ENCODE measurements at regions of chr17 and their contacts with region 1.

Region 1: DNA sequence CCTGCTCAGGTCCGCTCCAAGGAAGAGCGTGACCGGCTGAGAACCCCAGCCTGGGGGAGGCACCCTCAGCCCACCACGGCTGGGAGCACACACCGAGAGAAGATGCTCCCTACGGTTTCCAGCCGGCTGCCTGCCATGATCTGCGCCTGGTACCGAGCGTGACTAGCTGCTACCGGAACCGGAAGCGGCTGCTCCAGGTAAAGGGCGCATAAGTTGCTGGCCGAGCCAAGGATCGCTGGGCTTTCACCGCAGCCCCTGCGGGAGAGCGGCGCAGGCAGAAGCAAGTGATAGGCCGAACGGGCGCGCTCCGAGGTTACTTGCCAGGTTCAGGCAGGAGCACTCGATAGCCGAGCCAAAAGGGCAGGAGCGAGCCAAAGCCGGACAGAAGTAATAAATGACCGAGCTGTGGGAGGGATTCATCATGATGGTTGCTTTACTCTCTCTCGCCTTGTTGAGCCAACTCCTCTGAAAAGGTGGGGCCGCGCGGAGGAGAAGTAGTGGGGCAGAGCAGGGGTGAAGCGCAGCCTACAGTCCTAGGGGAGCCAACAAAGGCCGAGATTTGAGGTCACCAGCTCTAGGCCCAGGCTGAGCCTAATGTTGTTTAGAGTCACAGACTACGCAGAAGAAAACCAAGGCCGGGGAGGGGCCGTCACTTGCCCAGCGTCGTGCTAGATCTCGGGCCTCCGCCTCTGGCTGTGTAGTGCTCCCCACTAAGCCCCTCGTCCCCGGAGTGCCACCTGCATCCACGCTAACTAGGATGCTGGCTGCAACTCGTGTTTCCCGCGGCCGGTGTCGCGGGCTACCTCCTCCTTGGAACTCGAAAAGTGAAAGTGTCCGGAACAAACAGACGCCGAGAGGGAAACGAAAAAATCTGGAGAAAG is at the start of gene MRPS23:
- DNase-seq: peak; percentile 98 to 99
- ATAC-seq: peak; percentile 80 to 89 (median 86)
- H3K4me3 ChIP-seq: peak within 1 kb of the TSS; percentile 82
- H3K27ac ChIP-seq: peak within 1 kb of the TSS; percentile 93
- H3K4me1 ChIP-seq: peaks cover 51% of the 10 kb centered on the region
- H3K27me3 ChIP-seq: no peaks in the 10 kb centered on the region
- CTCF ChIP-seq: no peak
- total RNA-seq, gene MRPS23: 27.2 to 58.0 (median 40.4) TPM

Region 2: DNA sequence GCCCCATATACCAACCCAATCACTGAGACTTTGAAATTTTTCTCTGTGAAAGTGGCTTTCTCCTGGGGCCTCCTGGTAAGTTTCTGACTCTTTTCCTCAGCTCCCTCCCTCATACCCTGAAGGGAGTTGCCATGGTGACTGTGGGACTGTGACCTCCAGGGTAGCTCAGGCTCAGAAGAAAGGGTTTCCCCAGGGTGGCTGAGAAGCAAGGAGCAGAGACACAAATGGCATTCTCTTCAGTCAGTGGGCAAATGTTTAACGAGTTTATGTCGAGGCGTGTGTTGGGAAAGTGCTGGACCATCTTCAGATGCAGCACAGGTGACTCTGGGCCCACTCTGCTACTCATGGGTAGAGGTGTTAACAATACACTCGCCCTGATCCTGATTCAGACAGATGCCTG is 47.1 kb before region 1 on chr17:
- intact Hi-C with region 1: no loop called
- DNase-seq: no peak
- ATAC-seq: no peak
- H3K4me3 ChIP-seq: no peak overlapping the region
- H3K27ac ChIP-seq: no peak overlapping the region
- H3K4me1 ChIP-seq: no peaks in the 10 kb centered on the region
- H3K27me3 ChIP-seq: no peaks in the 10 kb centered on the region
- CTCF ChIP-seq: no peak

Region 3: DNA sequence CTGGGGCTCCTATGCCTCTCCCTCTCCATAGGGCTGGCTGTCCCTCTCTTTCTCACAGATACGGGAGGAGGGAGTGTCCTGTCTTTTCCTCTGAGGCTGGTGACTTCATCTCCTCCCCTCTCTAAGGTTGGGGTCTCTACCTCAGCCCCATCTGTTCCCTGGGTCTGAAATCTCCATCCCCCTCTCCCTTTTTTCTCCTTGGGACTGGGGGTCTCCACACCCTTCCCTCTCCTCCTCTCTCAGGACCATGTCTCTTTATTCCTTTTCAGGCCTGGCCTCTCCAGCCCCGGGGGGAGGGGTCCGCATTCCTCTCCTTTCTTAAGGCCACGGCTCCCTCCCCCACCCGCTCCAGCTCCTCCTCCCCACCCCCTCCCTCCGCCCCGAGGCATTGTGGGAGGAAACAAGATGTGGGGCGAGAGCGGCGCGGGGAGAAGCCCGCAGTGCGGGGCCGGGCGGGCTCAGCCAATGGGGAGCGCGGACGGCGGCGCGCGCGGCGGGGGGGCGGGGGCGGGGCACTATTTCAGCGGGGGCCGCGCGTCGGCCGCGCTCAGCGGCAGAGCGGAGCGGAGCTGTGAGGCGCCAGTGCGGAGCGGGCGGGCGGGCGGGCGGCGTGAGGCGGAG is 232.9 kb after region 1 on chr17 and contains the start of gene DYNLL2:
- intact Hi-C with region 1: loop called in 1 of 2 experiments (anchors 10 kb)
- DNase-seq: peak; percentile 96 to 97
- ATAC-seq: peak; percentile 92 to 94 (median 93)
- H3K4me3 ChIP-seq: peak within 1 kb of the TSS; percentile 97
- H3K27ac ChIP-seq: peak within 1 kb of the TSS; percentile 94
- H3K4me1 ChIP-seq: peaks cover 28% of the 10 kb centered on the region
- H3K27me3 ChIP-seq: peaks cover 0 to 2% (median 0%) of the 10 kb centered on the region in 3 donors
- CTCF ChIP-seq: no peak
- total RNA-seq, gene DYNLL2: 45.5 to 51.1 (median 47.2) TPM

Region 4: DNA sequence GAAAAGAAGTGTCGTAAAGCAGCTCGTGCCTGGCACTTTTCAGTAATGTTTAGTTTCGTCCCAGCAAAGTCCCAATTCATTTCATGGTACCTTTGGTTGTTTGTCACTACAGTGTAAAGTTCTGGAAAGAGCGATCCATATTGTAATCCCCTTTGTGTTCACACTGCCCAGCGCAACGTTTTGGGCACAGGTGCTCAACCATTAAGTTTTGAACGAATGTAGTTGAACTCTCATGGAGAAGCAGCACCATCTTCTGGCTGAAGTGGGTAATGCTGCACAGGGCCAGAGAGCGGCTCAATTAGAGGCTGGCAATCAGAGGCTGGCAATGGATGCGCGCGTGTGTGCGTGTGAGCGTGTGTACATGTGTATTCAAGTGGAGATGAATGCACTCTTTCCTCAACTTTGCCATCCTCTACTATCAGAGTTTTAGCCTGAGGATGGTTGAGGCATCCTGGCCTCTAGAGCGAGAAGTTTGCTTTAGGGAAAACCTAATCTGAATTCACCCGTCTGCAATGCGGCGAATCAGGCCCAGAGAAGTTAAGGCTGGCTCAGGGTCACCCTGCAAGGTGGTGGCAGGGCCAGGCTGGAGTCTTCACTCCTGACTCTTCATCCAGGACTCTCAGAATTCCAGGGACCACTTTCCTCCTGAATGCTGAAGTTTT is 263.0 kb after region 1 on chr17:
- intact Hi-C with region 1: loop called (anchors 5 to 10 kb)
- DNase-seq: peak; percentile 68 to 84
- ATAC-seq: peak; percentile 88 to 97 (median 92)
- H3K4me3 ChIP-seq: no peak overlapping the region
- H3K27ac ChIP-seq: no peak overlapping the region
- H3K4me1 ChIP-seq: no peaks in the 10 kb centered on the region
- H3K27me3 ChIP-seq: peaks cover 0 to 4% (median 0%) of the 10 kb centered on the region in 3 donors
- CTCF ChIP-seq: peak; percentile 94